Calu3 (cell line): ENCODE measurements at regions of chr5 and their contacts with region 1.

Region 1: GRCh38 chr5:172932313-172933017 is 26.8 kb upstream of the RPL26L1 start:
- DNase-seq: peak; percentile 82
- H3K4me3 Mint-ChIP-seq: no peak overlapping the region
- H3K27ac Mint-ChIP-seq: no peak overlapping the region
- H3K4me1 Mint-ChIP-seq: peaks cover 14% of the 10 kb centered on the region
- H3K27me3 Mint-ChIP-seq: no peaks in the 10 kb centered on the region
- CTCF ChIP-seq: peak; percentile 98

Region 2: DNA sequence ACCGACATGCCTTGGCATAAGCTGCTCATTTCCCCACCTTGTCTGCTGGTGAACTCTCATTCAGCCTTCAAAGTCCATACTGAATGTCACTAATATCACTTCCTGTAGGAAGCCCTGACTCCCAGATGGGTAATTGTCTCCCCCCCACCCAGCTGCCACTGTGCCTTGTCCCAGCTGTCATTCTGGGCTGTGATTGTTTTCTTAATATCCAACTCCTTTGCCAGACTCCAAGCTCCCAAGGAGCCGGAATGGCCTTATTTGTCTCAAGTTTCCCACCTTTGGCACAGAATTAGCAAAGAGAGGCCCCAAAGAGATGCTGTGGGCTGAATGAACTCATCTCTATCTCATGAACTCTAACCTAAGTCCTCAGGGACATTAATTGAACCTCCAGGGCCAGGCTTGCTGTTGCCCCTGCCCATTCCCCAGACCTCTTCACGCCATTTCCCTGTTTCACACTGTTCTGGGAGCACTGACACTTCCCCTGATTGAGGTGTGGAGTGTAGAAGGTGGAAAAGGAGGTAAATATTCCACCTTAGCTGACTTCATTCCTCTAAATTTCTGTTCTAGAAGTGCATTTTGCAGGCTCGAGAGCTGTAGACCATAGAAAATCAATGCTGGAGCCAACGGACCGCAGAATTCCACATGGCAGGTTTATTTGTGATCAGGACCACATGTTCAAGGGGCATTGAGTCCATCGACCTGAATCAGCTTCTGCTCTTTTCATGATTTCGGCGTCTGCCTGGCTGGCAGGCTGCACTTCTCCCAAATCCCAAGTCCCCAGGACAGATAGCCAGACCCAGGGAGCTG is 473.3 kb before region 1 on chr5:
- CTCF ChIA-PET with region 1: no interaction called
- intact Hi-C with region 1: loop called (anchors 10 kb)
- DNase-seq: no peak
- H3K4me3 Mint-ChIP-seq: no peak overlapping the region
- H3K27ac Mint-ChIP-seq: no peak overlapping the region
- H3K4me1 Mint-ChIP-seq: no peaks in the 10 kb centered on the region
- H3K27me3 Mint-ChIP-seq: peaks cover 17% of the 10 kb centered on the region
- CTCF ChIP-seq: no peak

Region 3: DNA sequence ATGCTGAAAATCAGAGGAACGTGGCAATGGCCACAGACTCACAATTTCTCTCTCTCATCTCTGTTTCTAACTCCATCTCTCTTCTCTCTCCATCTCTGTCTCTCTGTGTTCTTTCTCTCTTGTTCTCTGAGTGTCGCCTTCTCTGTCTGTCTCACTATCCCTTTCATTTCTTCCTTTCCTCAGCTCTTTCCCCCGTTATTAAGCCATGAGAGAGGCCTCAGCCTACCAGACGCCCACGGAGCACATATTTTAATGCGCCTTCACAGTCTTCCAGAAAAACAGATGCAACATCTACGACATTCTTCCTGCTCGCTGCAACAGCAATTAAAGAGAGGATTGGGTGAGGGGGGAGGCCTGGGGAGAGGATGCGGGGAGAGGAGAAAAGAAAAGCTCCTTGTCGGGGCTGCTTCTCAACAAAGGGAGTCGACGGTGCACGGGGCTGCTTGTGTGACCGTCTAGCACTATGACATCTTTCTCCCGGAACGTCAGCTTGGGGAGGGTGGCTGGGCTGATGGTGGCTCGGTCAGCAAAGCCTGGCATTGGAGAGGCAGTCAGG is 329.1 kb before region 1 on chr5:
- CTCF ChIA-PET with region 1: no interaction called
- intact Hi-C with region 1: no loop called
- DNase-seq: no peak
- H3K4me3 Mint-ChIP-seq: no peak overlapping the region
- H3K27ac Mint-ChIP-seq: no peak overlapping the region
- H3K4me1 Mint-ChIP-seq: no peaks in the 10 kb centered on the region
- H3K27me3 Mint-ChIP-seq: peaks cover 56% of the 10 kb centered on the region
- CTCF ChIP-seq: no peak

Region 4: GRCh38 chr5:172714491-172715421 is 217.7 kb before region 1 on chr5:
- CTCF ChIA-PET with region 1: interaction called, 30 read pairs
- intact Hi-C with region 1: loop called (anchors 1 kb)
- DNase-seq: peak; percentile 83
- H3K4me3 Mint-ChIP-seq: no peak overlapping the region
- H3K27ac Mint-ChIP-seq: no peak overlapping the region
- H3K4me1 Mint-ChIP-seq: peaks cover 8% of the 10 kb centered on the region
- H3K27me3 Mint-ChIP-seq: peaks cover 35% of the 10 kb centered on the region
- CTCF ChIP-seq: peak; percentile 93